ENCODE measurements at regions of chr11 and their contacts with region 1.

Region 1: GRCh38 chr11:114295676-114296604 is at the start of gene NNMT:
- DNase-seq: peak; percentile 99
- H3K4me3 Mint-ChIP-seq: peak within 1 kb of the TSS; percentile 78
- H3K27ac Mint-ChIP-seq: peak within 1 kb of the TSS; percentile 98
- H3K4me1 Mint-ChIP-seq: peaks cover 37% of the 10 kb centered on the region
- H3K27me3 Mint-ChIP-seq: no peaks in the 10 kb centered on the region
- CTCF ChIP-seq: no peak
- total RNA-seq, gene NNMT: 429 and 638 TPM in 2 replicates

Region 2: GRCh38 chr11:115222218-115222862 is 926.4 kb after region 1 on chr11:
- CTCF ChIA-PET with region 1: no interaction called
- POLR2A ChIA-PET with region 1: no interaction called
- intact Hi-C with region 1: loop called (anchors 10 kb)
- DNase-seq: peak; percentile 96
- H3K4me3 Mint-ChIP-seq: peak overlapping the region; percentile 8
- H3K27ac Mint-ChIP-seq: peak overlapping the region; percentile 85
- H3K4me1 Mint-ChIP-seq: peaks cover 28% of the 10 kb centered on the region
- H3K27me3 Mint-ChIP-seq: no peaks in the 10 kb centered on the region
- CTCF ChIP-seq: no peak

Measured in MCF 10A (cell line).